B cell (primary cell): ENCODE measurements at regions of chr19 and their contacts with region 1.

Region 1: GRCh38 chr19:57746580-57747471 is at the start of gene ZNF776:
- DNase-seq: peak; percentile 91
- ATAC-seq: peak; percentile 97
- H3K4me3 ChIP-seq: peak within 1 kb of the TSS; percentile 66 to 92 (median 74)
- H3K4me3 Mint-ChIP-seq: peak within 1 kb of the TSS; percentile 91
- H3K27ac ChIP-seq: peak within 1 kb of the TSS; percentile 75 to 84
- H3K27ac Mint-ChIP-seq: peak within 1 kb of the TSS; percentile 88
- H3K4me1 ChIP-seq: peaks cover 15 to 19% of the 10 kb centered on the region in 2 donors
- H3K4me1 Mint-ChIP-seq: peaks cover 39% of the 10 kb centered on the region
- H3K27me3 ChIP-seq: no peaks in the 10 kb centered on the region
- H3K27me3 Mint-ChIP-seq: no peaks in the 10 kb centered on the region
- CTCF ChIP-seq: no peak
- total RNA-seq, gene ZNF776: 47.5 and 51.6 TPM in 2 replicates

Region 2: DNA sequence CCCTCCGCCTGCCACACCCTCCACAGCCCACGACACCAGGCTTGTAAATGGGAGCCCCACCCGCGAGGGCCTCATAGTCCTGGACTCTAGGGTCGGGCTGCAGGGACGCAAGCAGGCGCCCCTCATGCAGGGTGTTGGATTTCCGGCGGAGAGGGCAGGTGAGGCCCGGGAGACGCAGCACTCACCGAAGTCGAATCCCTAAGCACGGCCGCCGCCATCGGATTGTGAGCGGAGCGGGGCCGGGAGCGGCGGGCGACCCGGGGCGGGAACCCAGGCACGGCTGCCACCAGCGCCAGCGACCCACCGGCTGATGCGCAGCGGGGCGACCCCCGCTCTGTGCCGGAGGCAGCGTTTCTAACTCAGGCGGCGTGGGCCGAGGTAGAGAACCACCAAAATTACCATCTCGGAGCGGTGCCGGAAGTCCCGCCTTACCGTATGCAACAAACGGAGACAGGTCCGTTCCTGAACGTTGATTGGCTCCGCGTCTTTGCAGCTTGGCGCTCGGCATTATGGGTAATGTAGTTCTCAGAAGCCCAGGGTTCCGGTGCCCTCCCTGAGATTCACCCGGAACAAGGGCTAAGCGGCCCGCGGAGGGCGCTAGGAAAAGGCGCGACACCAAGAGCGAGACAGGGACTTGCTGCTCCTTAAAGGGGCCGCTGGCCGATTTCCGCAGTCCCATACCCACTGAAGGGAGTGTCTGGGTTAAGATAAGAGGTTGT is 168.2 kb before region 1 on chr19 and contains the start of gene ZNF416:
- CTCF ChIA-PET with region 1: no interaction called
- POLR2A ChIA-PET with region 1: no interaction called
- intact Hi-C with region 1: loop called (anchors 2 kb)
- DNase-seq: peak; percentile 99
- ATAC-seq: peak; percentile 89
- H3K4me3 ChIP-seq: peak within 1 kb of the TSS; percentile 28 to 90 (median 72)
- H3K4me3 Mint-ChIP-seq: peak within 1 kb of the TSS; percentile 86
- H3K27ac ChIP-seq: peak within 1 kb of the TSS; percentile 46 to 79
- H3K27ac Mint-ChIP-seq: peak within 1 kb of the TSS; percentile 94
- H3K4me1 ChIP-seq: peaks cover 19 to 27% of the 10 kb centered on the region in 2 donors
- H3K4me1 Mint-ChIP-seq: peaks cover 25% of the 10 kb centered on the region
- H3K27me3 ChIP-seq: no peaks in the 10 kb centered on the region
- H3K27me3 Mint-ChIP-seq: no peaks in the 10 kb centered on the region
- CTCF ChIP-seq: no peak
- total RNA-seq, gene ZNF416: 13.0 and 13.9 TPM in 2 replicates

Region 3: GRCh38 chr19:57632987-57633831 is 113.6 kb before region 1 on chr19 and contains the start of gene ZNF211:
- CTCF ChIA-PET with region 1: no interaction called
- POLR2A ChIA-PET with region 1: no interaction called
- intact Hi-C with region 1: loop called (anchors 10 kb)
- DNase-seq: peak; percentile 93
- ATAC-seq: peak; percentile 99
- H3K4me3 ChIP-seq: peak within 1 kb of the TSS; percentile 67 to 95 (median 84)
- H3K4me3 Mint-ChIP-seq: peak within 1 kb of the TSS; percentile 92
- H3K27ac ChIP-seq: peak within 1 kb of the TSS; percentile 70 to 80
- H3K27ac Mint-ChIP-seq: peak within 1 kb of the TSS; percentile 88
- H3K4me1 ChIP-seq: peaks cover 11 to 17% of the 10 kb centered on the region in 2 donors
- H3K4me1 Mint-ChIP-seq: peaks cover 22% of the 10 kb centered on the region
- H3K27me3 ChIP-seq: no peaks in the 10 kb centered on the region
- H3K27me3 Mint-ChIP-seq: no peaks in the 10 kb centered on the region
- CTCF ChIP-seq: no peak
- total RNA-seq, gene ZNF211: 53.5 and 53.6 TPM in 2 replicates

Region 4: GRCh38 chr19:57769345-57770131 is 22.7 kb after region 1 on chr19 and contains the start of gene ZNF586:
- CTCF ChIA-PET with region 1: interaction called, 6 read pairs
- POLR2A ChIA-PET with region 1: no interaction called
- intact Hi-C with region 1: loop called (anchors 1 kb)
- DNase-seq: peak; percentile 91
- ATAC-seq: peak; percentile 99
- H3K4me3 ChIP-seq: peak within 1 kb of the TSS; percentile 65 to 86 (median 82)
- H3K4me3 Mint-ChIP-seq: peak within 1 kb of the TSS; percentile 94
- H3K27ac ChIP-seq: peak within 1 kb of the TSS; percentile 75 to 83
- H3K27ac Mint-ChIP-seq: peak within 1 kb of the TSS; percentile 90
- H3K4me1 ChIP-seq: peaks cover 23 to 49% of the 10 kb centered on the region in 2 donors
- H3K4me1 Mint-ChIP-seq: peaks cover 37% of the 10 kb centered on the region
- H3K27me3 ChIP-seq: no peaks in the 10 kb centered on the region
- H3K27me3 Mint-ChIP-seq: no peaks in the 10 kb centered on the region
- CTCF ChIP-seq: no peak
- total RNA-seq, gene ZNF586: 48.0 and 51.3 TPM in 2 replicates

Region 5: GRCh38 chr19:57850553-57851017 is 103.8 kb after region 1 on chr19:
- CTCF ChIA-PET with region 1: no interaction called
- POLR2A ChIA-PET with region 1: no interaction called
- intact Hi-C with region 1: loop called (anchors 5 kb)
- DNase-seq: peak; percentile 19
- ATAC-seq: no peak
- H3K4me3 ChIP-seq: peak overlapping the region; percentile 26 to 95 (median 76)
- H3K4me3 Mint-ChIP-seq: peak overlapping the region; percentile 97
- H3K27ac ChIP-seq: peak overlapping the region in 1 of 2 donors; percentile 93
- H3K27ac Mint-ChIP-seq: peak overlapping the region; percentile 94
- H3K4me1 ChIP-seq: peaks cover 7 to 16% of the 10 kb centered on the region in 2 donors
- H3K4me1 Mint-ChIP-seq: peaks cover 22% of the 10 kb centered on the region
- H3K27me3 ChIP-seq: no peaks in the 10 kb centered on the region
- H3K27me3 Mint-ChIP-seq: no peaks in the 10 kb centered on the region
- CTCF ChIP-seq: no peak

Region 6: GRCh38 chr19:57947208-57948134 is 200.6 kb after region 1 on chr19 and contains the start of gene ZNF256:
- CTCF ChIA-PET with region 1: no interaction called
- POLR2A ChIA-PET with region 1: no interaction called
- intact Hi-C with region 1: loop called (anchors 1 kb)
- DNase-seq: peak; percentile 95
- ATAC-seq: peak; percentile 99
- H3K4me3 ChIP-seq: peak within 1 kb of the TSS; percentile 71 to 90 (median 87)
- H3K4me3 Mint-ChIP-seq: peak within 1 kb of the TSS; percentile 96
- H3K27ac ChIP-seq: peak within 1 kb of the TSS; percentile 77 to 89
- H3K27ac Mint-ChIP-seq: peak within 1 kb of the TSS; percentile 89
- H3K4me1 ChIP-seq: peaks cover 16 to 27% of the 10 kb centered on the region in 2 donors
- H3K4me1 Mint-ChIP-seq: peaks cover 36% of the 10 kb centered on the region
- H3K27me3 ChIP-seq: peaks cover 0 to 6% (median 0%) of the 10 kb centered on the region in 4 experiments
- H3K27me3 Mint-ChIP-seq: peaks cover 6% of the 10 kb centered on the region
- CTCF ChIP-seq: peak; percentile 61
- total RNA-seq, gene ZNF256: 18.3 and 19.0 TPM in 2 replicates